Mammary epithelial cell (primary cell): ENCODE measurements at regions of chr15 and their contacts with region 1.

Region 1: DNA sequence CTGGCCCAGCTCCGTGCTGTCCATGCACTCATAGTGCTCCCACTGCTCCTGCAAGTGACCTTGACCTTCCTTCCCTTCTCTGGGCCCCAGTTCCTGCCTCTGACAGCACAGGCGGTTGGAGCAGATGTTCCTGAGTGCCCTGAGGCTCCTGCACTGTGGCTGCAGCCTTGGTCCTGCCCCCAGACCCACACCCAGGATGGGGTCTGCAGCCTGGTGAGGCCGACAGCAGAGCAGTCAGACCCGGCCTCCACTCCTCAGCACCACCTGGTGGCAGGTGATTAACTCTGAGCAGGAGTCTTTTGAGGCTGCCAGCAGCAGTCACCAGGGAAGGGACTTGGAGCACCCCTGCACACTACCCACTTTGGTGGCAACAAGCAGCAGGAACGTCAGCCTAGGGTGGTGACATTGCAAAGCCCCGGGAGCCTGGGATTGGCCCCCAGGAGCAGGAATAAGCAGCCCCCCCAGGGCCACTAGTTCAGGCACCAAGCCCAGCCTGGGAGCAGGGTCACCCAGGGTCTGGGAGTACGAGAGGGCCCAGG is 64.6 kb downstream of the CYP11A1 start:
- DNase-seq: peak; percentile 15
- H3K4me3 ChIP-seq: no peak overlapping the region
- H3K27ac ChIP-seq: no peak overlapping the region
- H3K4me1 ChIP-seq: peaks cover 12% of the 10 kb centered on the region
- H3K27me3 ChIP-seq: no peaks in the 10 kb centered on the region
- CTCF ChIP-seq: peak; percentile 50 to 84

Region 2: DNA sequence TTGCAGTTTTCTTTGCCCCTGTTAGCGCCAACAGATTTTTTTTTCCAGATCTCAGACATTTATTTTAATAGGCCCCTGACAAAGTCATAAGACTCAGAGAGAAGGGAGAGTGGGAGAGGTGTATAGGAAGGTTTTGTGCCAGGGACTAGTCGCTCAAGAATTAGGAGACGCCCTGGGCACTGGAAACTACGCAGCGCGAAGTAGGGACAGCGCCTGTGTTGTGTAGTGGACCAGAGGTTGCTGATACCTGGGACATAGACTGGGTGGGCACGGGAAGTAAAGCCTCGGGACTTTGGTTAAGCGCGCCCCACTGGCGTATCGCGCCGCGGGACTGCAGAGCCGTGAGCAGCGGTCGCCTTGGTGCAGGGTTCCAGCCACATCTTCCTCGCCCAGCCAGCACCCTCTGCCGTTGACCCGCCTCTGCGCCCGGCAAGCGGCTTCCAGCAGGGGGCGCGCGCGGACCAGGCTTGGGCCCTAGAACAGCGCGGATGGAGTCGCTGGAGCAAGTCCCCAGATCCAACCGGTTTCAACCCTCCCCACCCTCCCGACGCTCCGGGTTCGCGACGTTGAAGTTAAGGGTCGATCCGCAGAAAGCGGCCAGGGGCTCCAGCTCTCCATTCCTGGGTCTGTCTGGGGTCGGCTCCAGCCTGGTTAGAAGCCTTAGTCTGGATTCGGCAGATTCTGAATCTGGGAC is 175.5 kb before region 1 on chr15:
- CTCF ChIA-PET with region 1: interaction called, 23 read pairs
- dilution Hi-C with region 1: no loop called
- in situ Hi-C with region 1: loop called (anchors 5 kb)
- intact Hi-C with region 1: loop called (anchors 1 kb)
- DNase-seq: peak; percentile 76
- H3K4me3 ChIP-seq: peak overlapping the region in 1 of 3 experiments; percentile 41
- H3K27ac ChIP-seq: no peak overlapping the region
- H3K4me1 ChIP-seq: peaks cover 13% of the 10 kb centered on the region
- H3K27me3 ChIP-seq: peaks cover 41% of the 10 kb centered on the region
- CTCF ChIP-seq: peak; percentile 80 to 99

Region 3: DNA sequence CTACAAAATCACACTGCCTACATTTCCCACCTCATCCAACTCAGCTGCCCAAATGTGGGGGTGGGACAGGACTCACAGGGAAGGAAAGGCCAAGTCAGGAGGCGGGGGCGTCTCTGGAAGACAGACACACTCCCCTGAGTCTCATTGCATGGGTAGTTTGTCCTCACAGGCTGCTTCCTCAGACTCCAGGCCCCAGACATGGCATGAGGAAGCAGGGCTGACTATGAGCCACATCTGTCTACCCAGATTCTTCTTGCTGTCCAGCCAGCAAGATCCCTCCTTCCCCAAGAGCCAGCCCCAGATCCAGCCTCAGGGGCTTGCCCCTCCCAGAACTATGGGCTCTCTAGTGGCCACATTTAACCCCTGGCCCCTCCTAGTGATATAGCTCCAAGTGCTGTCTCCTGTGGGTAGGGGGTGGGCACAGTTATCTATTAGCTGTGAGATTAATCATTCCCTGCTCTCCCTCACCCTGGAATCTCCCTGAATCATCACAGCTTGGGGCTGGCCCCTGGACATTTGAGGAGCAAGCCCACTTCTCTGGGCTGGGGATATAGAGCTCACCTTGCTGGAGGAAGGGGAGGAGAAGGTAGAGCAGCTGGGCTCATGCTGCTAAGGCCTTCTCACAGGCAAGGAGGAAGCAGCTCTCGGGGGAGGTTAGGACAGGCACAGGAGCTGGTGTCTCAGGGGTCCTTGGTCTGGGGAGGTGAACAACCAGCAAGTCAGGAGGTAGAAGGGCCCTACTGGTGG is 68.9 kb before region 1 on chr15:
- CTCF ChIA-PET with region 1: no interaction called
- dilution Hi-C with region 1: no loop called
- in situ Hi-C with region 1: no loop called
- intact Hi-C with region 1: no loop called
- DNase-seq: no peak
- H3K4me3 ChIP-seq: no peak overlapping the region
- H3K27ac ChIP-seq: no peak overlapping the region
- H3K4me1 ChIP-seq: no peaks in the 10 kb centered on the region
- H3K27me3 ChIP-seq: no peaks in the 10 kb centered on the region
- CTCF ChIP-seq: no peak